Vagina (tissue), 2 donors: ENCODE measurements at regions of chr2 and their contacts with region 1.

Region 1: GRCh38 chr2:141384676-141385075 is 746.1 kb downstream of the LRP1B start:
- DNase-seq: no peak
- H3K4me3 ChIP-seq: no peak overlapping the region
- H3K27ac ChIP-seq: no peak overlapping the region
- H3K4me1 ChIP-seq: no peaks in the 10 kb centered on the region
- H3K27me3 ChIP-seq: no peaks in the 10 kb centered on the region
- CTCF ChIP-seq: no peak
- POLR2A ChIP-seq: no peak

Region 2: DNA sequence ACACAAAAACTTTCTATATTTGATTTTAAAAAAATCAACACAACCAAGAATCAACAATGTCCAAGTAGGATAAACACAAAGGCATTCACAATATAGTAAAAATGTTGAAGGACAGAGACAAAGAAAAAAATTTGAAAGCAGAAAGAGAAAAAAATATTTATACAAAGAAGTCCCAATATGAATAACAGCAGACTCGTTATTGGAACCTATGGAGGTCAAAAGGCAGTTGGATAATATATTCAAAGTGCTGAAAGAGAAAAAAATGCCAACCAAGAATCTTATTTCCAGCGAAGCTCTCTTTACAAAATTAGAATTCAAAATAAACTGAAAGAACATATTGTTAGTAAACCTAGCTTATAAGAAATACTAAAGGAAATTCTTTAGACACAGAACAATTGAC is 113.3 kb before region 1 on chr2:
- intact Hi-C with region 1: no loop called
- DNase-seq: no peak
- H3K4me3 ChIP-seq: no peak overlapping the region
- H3K27ac ChIP-seq: no peak overlapping the region
- H3K4me1 ChIP-seq: no peaks in the 10 kb centered on the region
- H3K27me3 ChIP-seq: no peaks in the 10 kb centered on the region
- CTCF ChIP-seq: no peak
- POLR2A ChIP-seq: no peak

Region 3: GRCh38 chr2:141611176-141611571 is 226.5 kb after region 1 on chr2:
- intact Hi-C with region 1: loop called (anchors 10 kb)
- DNase-seq: no peak
- H3K4me3 ChIP-seq: no peak overlapping the region
- H3K27ac ChIP-seq: no peak overlapping the region
- H3K4me1 ChIP-seq: no peaks in the 10 kb centered on the region
- H3K27me3 ChIP-seq: no peaks in the 10 kb centered on the region
- CTCF ChIP-seq: no peak
- POLR2A ChIP-seq: no peak